Left lung (tissue), 14 donors: ENCODE measurements at regions of chr19 and their contacts with region 1.

Region 1: GRCh38 chr19:3544742-3545668 is 6.0 kb downstream of the TEKTIP1 start:
- DNase-seq: peak in 3 of 4 donors; percentile 44 to 97 (median 72)
- ATAC-seq: peak; percentile 82
- H3K4me3 ChIP-seq: no peak overlapping the region
- H3K27ac ChIP-seq: no peak overlapping the region
- H3K4me1 ChIP-seq: peaks cover 0 to 22% of the 10 kb centered on the region in 2 donors
- H3K27me3 ChIP-seq: no peaks in the 10 kb centered on the region
- CTCF ChIP-seq: peak; percentile 84 to 96

Region 2: DNA sequence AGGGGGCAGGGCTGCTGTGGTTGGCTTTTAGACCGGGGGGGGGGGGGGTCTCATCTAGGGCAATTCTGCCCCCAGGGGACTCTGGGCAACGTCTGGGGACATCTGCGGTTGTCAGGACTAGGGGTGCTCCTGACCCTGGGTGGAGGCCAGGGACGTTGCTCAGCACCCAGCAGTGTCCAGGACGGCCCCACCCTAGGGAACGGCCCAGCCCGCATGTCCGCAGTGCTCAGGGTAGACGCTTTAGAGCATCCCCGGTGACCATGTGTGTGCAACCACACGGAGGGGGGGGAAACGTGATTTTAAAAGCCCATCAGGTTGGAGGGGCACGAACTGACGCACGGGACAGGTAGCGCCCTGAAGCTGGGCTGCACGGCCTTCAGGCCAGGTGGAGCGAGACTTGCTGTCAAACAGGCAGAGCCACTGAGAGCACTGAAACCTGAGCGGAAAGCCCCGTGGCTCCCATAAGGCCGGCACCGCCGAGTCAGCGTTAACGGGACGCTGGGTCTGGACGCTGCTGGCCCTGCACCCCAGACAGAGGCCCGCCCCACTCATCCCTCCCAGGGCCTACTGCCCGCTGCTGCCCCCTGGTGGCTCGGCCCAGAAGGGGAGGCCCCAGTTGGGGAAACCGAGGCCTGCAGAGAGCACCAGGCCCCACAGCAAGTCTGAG is 73.3 kb after region 1 on chr19:
- intact Hi-C with region 1: loop called in 1 of 2 experiments (anchors 10 kb)
- DNase-seq: peak; percentile 38 to 90 (median 77)
- ATAC-seq: peak; percentile 92
- H3K4me3 ChIP-seq: no peak overlapping the region
- H3K27ac ChIP-seq: no peak overlapping the region
- H3K4me1 ChIP-seq: peaks cover 5 to 21% of the 10 kb centered on the region in 2 donors
- H3K27me3 ChIP-seq: no peaks in the 10 kb centered on the region
- CTCF ChIP-seq: peak; percentile 89 to 92